ENCODE measurements at regions of chr1 and their contacts with region 1.

Region 1: DNA sequence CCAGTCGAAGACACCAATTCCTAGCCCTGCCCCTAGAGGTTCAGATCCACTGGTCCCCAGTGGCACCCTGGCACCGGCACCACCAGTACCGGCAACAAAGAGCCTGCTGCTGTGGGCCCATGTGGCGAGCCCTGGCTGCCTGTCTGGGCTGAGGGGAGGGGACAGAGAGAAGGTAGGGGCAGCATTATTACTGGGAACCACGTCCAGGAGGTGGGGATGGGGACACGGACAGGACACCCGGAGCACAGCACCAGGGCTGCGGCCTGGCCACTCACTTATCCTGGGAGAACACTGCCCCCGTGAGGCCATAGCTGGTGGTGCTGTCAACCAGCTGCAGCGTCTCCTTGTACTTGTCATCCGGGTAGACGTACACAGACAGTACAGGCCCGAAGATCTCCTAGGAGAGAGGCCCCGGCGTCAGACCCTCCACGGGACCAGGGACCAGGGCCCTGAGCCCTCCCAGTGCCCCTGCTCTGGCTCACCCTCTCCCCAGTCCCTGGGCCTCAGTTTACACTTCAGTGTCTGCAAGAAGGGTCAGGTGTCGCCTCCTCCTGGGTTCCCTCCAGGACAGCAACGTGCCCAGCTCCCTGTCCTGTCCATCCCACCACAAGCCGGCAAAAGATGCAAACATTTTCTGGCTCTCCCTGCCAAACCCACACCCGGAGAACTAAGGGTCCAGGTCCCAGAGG is 15.8 kb upstream of the TAS1R2 start:
- DNase-seq: peak; percentile 89 to 93 (median 93)
- H3K4me3 ChIP-seq: no peak overlapping the region
- H3K27ac ChIP-seq: no peak overlapping the region
- H3K4me1 ChIP-seq: peaks cover 0 to 5% (median 0%) of the 10 kb centered on the region in 3 donors
- H3K27me3 ChIP-seq: no peaks in the 10 kb centered on the region
- CTCF ChIP-seq: peak; percentile 70

Region 2: DNA sequence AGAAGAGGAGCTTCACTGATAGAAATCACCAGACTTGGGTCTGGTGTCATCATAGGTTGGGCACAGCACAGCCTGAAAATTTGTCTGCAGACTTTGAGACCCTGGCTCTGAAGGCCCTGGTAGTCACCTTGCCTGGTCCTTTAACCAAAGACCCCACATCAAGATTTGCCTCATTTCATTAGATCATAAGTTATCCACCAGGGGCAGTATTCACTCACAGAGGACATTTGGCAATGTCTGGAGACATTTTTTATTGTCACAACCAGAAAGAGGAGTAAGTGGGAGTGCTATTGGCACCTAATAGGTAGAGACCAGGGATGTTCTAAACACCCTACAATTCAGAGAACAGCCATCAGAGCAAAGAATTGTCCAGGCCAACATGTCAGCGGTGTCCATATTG is 266.7 kb before region 1 on chr1:
- intact Hi-C with region 1: loop called (anchors 10 kb)
- DNase-seq: no peak
- H3K4me3 ChIP-seq: no peak overlapping the region
- H3K27ac ChIP-seq: no peak overlapping the region
- H3K4me1 ChIP-seq: no peaks in the 10 kb centered on the region
- H3K27me3 ChIP-seq: peaks cover 6% of the 10 kb centered on the region
- CTCF ChIP-seq: no peak

Region 3: DNA sequence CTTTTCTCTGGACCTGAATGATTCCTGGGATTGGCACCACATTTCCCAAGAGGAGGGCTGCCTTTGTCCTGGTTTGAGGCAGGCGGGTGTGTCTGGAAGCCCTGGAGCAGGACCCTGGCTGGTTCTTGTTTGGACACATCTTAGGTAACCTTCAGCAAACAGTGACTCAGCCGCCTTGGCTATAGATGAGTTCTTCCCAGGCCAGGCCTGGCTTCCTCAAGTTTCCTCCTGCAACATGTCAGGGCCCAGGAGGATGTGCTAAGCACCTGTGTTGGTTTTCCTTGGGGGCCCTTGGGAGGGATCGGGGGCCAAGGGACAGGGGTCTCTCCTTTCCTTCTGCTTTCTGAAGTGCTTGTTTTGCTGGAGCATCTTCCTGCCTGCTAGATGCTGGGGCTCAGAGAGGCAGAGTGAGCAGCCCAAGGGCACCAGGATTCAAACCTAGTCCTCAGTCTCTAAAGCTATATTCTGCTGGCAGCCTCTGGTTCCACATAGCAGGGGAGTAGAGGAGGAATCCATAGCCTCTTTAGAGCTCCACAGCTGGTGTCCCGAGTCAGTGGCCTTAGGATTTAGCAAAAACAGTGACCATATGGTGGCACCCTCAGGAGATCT is 206.4 kb before region 1 on chr1:
- intact Hi-C with region 1: no loop called
- DNase-seq: no peak
- H3K4me3 ChIP-seq: no peak overlapping the region
- H3K27ac ChIP-seq: no peak overlapping the region
- H3K4me1 ChIP-seq: no peaks in the 10 kb centered on the region
- H3K27me3 ChIP-seq: peaks cover 3% of the 10 kb centered on the region
- CTCF ChIP-seq: no peak

Measured in kidney (tissue), 22 donors.